Naive thymus-derived CD4-positive, alpha-beta T cell (primary cell): ENCODE measurements at regions of chr13 and their contacts with region 1.

Region 1: GRCh38 chr13:108322206-108322824 is 52.8 kb downstream of the TNFSF13B start:
- DNase-seq: peak in 7 of 9 donors; percentile 12 to 58 (median 48)
- ATAC-seq: peak; percentile 92
- H3K4me3 ChIP-seq: no peak overlapping the region
- H3K4me3 Mint-ChIP-seq: no peak overlapping the region
- H3K27ac ChIP-seq: no peak overlapping the region
- H3K27ac Mint-ChIP-seq: no peak overlapping the region
- H3K4me1 ChIP-seq: peaks cover 0 to 12% of the 10 kb centered on the region in 2 donors
- H3K4me1 Mint-ChIP-seq: peaks cover 0 to 33% (median 17%) of the 10 kb centered on the region in 7 donors
- H3K27me3 ChIP-seq: no peaks in the 10 kb centered on the region
- H3K27me3 Mint-ChIP-seq: peaks cover 5 to 47% (median 7%) of the 10 kb centered on the region in 5 donors

Region 2: DNA sequence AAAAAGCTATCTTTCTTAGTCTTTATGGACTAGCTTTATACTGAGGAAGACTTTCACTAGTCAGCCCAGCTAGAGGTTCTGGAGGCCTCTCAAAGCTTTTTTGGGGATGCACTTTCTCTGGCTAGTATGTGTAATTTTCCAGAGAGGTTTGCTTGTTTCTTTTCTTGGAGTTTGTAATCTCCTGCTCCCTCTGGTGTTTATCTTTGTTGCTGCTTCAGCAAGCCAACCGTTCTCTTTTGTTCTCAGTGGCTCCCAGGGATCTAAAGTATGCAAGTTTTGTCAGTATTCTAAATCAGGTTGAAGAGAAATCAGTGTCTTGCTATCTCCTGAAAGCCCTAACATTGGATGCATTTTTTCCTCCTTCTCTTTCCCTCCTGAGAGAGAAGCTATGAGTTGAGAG is 185.9 kb after region 1 on chr13:
- CTCF ChIA-PET with region 1: interaction called, 14 read pairs
- POLR2A ChIA-PET with region 1: interaction called, 5 read pairs
- intact Hi-C with region 1: loop called (anchors 1 to 5 kb)
- DNase-seq: peak in 4 of 9 donors; percentile 9 to 27 (median 13)
- ATAC-seq: no peak
- H3K4me3 ChIP-seq: no peak overlapping the region
- H3K4me3 Mint-ChIP-seq: no peak overlapping the region
- H3K27ac ChIP-seq: no peak overlapping the region
- H3K27ac Mint-ChIP-seq: no peak overlapping the region
- H3K4me1 ChIP-seq: no peaks in the 10 kb centered on the region
- H3K4me1 Mint-ChIP-seq: peaks cover 0 to 5% (median 0%) of the 10 kb centered on the region in 7 donors
- H3K27me3 ChIP-seq: no peaks in the 10 kb centered on the region
- H3K27me3 Mint-ChIP-seq: no peaks in the 10 kb centered on the region

Region 3: DNA sequence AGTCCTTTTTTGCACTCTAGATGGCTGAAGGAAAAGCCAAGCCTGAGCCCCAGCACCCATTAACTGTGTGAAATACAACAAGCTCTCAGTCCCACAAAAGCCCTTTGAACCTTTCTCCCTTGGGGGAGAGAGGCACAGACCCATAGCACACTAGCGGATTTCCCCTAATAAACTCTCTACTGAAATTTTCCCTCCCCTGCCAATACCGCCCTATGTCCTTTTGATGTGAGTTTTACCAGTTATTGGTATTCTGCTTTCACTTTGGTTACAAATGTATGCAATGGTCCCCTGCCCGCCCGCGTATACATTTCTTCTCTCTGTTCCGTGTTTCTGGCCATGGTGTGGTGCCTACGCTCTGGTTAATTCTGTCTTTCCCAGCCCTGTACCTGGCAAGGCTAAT is 253.1 kb after region 1 on chr13:
- CTCF ChIA-PET with region 1: no interaction called
- POLR2A ChIA-PET with region 1: no interaction called
- intact Hi-C with region 1: loop called in 1 of 2 experiments (anchors 5 kb)
- DNase-seq: no peak
- ATAC-seq: no peak
- H3K4me3 ChIP-seq: no peak overlapping the region
- H3K4me3 Mint-ChIP-seq: no peak overlapping the region
- H3K27ac ChIP-seq: no peak overlapping the region
- H3K27ac Mint-ChIP-seq: no peak overlapping the region
- H3K4me1 ChIP-seq: no peaks in the 10 kb centered on the region
- H3K4me1 Mint-ChIP-seq: peaks cover 0 to 1% (median 0%) of the 10 kb centered on the region in 7 donors
- H3K27me3 ChIP-seq: no peaks in the 10 kb centered on the region
- H3K27me3 Mint-ChIP-seq: peaks cover 0 to 7% (median 0%) of the 10 kb centered on the region in 5 donors

Region 4: GRCh38 chr13:108816381-108816780 is 494.1 kb after region 1 on chr13:
- CTCF ChIA-PET with region 1: no interaction called
- POLR2A ChIA-PET with region 1: no interaction called
- intact Hi-C with region 1: loop called in 1 of 2 experiments (anchors 10 kb)
- DNase-seq: no peak
- ATAC-seq: no peak
- H3K4me3 ChIP-seq: no peak overlapping the region
- H3K4me3 Mint-ChIP-seq: no peak overlapping the region
- H3K27ac ChIP-seq: no peak overlapping the region
- H3K27ac Mint-ChIP-seq: no peak overlapping the region
- H3K4me1 ChIP-seq: no peaks in the 10 kb centered on the region
- H3K4me1 Mint-ChIP-seq: no peaks in the 10 kb centered on the region
- H3K27me3 ChIP-seq: no peaks in the 10 kb centered on the region
- H3K27me3 Mint-ChIP-seq: peaks cover 0 to 4% (median 3%) of the 10 kb centered on the region in 5 donors

Region 5: GRCh38 chr13:108895220-108895704 is 572.9 kb after region 1 on chr13:
- CTCF ChIA-PET with region 1: interaction called, 14 read pairs
- POLR2A ChIA-PET with region 1: no interaction called
- intact Hi-C with region 1: loop called (anchors 1 kb)
- DNase-seq: peak in 5 of 9 donors; percentile 10 to 25 (median 21)
- ATAC-seq: no peak
- H3K4me3 ChIP-seq: no peak overlapping the region
- H3K4me3 Mint-ChIP-seq: no peak overlapping the region
- H3K27ac ChIP-seq: no peak overlapping the region
- H3K27ac Mint-ChIP-seq: no peak overlapping the region
- H3K4me1 ChIP-seq: peaks cover 0 to 5% of the 10 kb centered on the region in 2 donors
- H3K4me1 Mint-ChIP-seq: peaks cover 0 to 16% (median 6%) of the 10 kb centered on the region in 7 donors
- H3K27me3 ChIP-seq: no peaks in the 10 kb centered on the region
- H3K27me3 Mint-ChIP-seq: peaks cover 5 to 24% (median 7%) of the 10 kb centered on the region in 5 donors